ENCODE measurements at regions of chr16 and their contacts with region 1.

Region 1: DNA sequence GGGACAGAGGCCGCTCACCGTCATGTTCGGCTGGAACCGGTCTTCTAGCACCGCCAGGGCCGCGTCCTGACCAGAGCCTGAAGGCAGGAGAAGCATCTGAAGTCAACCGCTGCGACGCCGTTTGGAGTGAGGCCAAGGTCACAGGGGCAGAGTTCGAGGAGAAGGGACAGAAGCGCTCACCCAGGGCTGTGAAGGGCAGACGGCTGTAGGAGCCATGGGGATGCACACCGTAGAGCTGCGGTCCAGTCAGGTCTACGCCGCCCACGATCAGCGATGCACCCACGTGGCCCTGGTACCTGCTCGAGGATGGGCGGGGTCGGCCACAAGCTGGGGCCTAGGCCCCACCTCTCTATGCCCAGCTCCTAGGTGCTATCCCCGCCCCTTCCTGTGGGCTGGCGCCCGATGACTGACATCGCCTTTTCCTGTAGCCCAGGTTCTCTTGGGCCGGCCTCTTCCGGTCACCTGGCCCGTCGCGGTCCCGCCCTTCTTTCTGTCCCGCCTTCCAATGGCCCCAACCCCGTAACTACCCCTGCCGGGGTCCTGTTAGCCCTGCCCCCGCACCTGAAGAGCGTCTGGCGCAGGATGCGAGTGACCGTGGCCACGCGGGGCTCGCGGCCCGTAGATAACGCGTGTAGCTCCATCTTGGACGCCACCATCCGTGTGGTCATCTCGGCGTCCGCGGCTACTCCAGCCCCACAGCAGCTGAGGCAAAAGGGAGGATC is 1.1 kb downstream of the PSMB10 start:
- DNase-seq: peak; percentile 95
- ATAC-seq: peak; percentile 89
- H3K4me3 ChIP-seq: peak overlapping the region; percentile 77 to 96 (median 93)
- H3K4me3 Mint-ChIP-seq: peak overlapping the region; percentile 100
- H3K27ac ChIP-seq: peak overlapping the region; percentile 67 to 85
- H3K27ac Mint-ChIP-seq: peak overlapping the region; percentile 99
- H3K4me1 ChIP-seq: peaks cover 25 to 38% of the 10 kb centered on the region in 2 donors
- H3K4me1 Mint-ChIP-seq: peaks cover 31% of the 10 kb centered on the region
- H3K27me3 ChIP-seq: no peaks in the 10 kb centered on the region
- H3K27me3 Mint-ChIP-seq: no peaks in the 10 kb centered on the region
- CTCF ChIP-seq: no peak

Region 2: DNA sequence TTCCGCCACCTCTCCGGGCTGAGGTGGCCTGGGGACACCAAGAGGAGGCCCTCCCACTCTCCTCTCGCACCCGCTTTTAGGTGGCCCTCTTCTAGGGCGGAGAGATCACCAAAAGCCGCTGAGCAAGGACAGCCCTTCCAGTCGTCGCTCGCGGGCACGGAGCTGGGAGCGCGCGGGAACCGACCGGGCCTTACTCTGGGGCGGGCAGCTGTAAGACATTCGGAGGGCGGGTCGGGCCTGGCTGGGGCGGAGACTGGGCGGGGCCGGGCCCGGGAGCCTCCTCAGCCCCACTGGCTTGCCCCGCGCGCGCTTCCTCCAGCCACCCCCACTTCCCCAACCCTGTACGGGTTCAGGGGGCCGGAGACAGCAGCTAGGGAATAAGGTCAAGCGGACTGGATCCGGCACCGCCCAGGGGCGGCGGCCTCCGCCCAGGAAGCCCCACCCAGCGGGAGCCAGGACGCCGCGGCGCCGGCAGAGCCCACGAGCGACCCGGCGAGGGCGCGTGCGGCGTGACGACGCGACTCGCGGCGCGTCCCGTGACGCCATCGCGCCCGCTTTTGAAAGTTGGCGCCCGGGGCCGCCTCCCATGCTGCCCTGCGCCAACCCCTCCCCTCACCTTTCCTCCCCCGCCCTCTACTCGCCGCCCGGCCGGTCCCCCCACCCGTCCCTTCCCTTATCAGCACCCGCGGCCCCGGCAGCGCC is 373.6 kb before region 1 on chr16:
- CTCF ChIA-PET with region 1: no interaction called
- POLR2A ChIA-PET with region 1: interaction called, 3 read pairs
- intact Hi-C with region 1: loop called (anchors 5 kb)
- DNase-seq: peak; percentile 99
- ATAC-seq: peak; percentile 74
- H3K4me3 ChIP-seq: peak overlapping the region; percentile 50 to 76 (median 60)
- H3K4me3 Mint-ChIP-seq: peak overlapping the region; percentile 89
- H3K27ac ChIP-seq: peak overlapping the region; percentile 71 to 80
- H3K27ac Mint-ChIP-seq: peak overlapping the region; percentile 95
- H3K4me1 ChIP-seq: peaks cover 42 to 55% of the 10 kb centered on the region in 2 donors
- H3K4me1 Mint-ChIP-seq: peaks cover 50% of the 10 kb centered on the region
- H3K27me3 ChIP-seq: no peaks in the 10 kb centered on the region
- H3K27me3 Mint-ChIP-seq: no peaks in the 10 kb centered on the region
- CTCF ChIP-seq: no peak

Region 3: GRCh38 chr16:67790071-67790470 is 145.5 kb before region 1 on chr16:
- CTCF ChIA-PET with region 1: no interaction called
- POLR2A ChIA-PET with region 1: no interaction called
- intact Hi-C with region 1: no loop called
- DNase-seq: no peak
- ATAC-seq: no peak
- H3K4me3 ChIP-seq: no peak overlapping the region
- H3K4me3 Mint-ChIP-seq: no peak overlapping the region
- H3K27ac ChIP-seq: no peak overlapping the region
- H3K27ac Mint-ChIP-seq: no peak overlapping the region
- H3K4me1 ChIP-seq: peaks cover 18 to 24% of the 10 kb centered on the region in 2 donors
- H3K4me1 Mint-ChIP-seq: peaks cover 29% of the 10 kb centered on the region
- H3K27me3 ChIP-seq: no peaks in the 10 kb centered on the region
- H3K27me3 Mint-ChIP-seq: no peaks in the 10 kb centered on the region
- CTCF ChIP-seq: no peak

Region 4: GRCh38 chr16:67816240-67817031 is 119.1 kb before region 1 on chr16:
- CTCF ChIA-PET with region 1: interaction called, 21 read pairs
- POLR2A ChIA-PET with region 1: no interaction called
- intact Hi-C with region 1: no loop called
- DNase-seq: peak; percentile 92
- ATAC-seq: peak; percentile 99
- H3K4me3 ChIP-seq: no peak overlapping the region
- H3K4me3 Mint-ChIP-seq: peak overlapping the region; percentile 65
- H3K27ac ChIP-seq: no peak overlapping the region
- H3K27ac Mint-ChIP-seq: peak overlapping the region; percentile 59
- H3K4me1 ChIP-seq: peaks cover 0 to 7% of the 10 kb centered on the region in 2 donors
- H3K4me1 Mint-ChIP-seq: peaks cover 6% of the 10 kb centered on the region
- H3K27me3 ChIP-seq: no peaks in the 10 kb centered on the region
- H3K27me3 Mint-ChIP-seq: no peaks in the 10 kb centered on the region
- CTCF ChIP-seq: peak; percentile 100

Region 5: GRCh38 chr16:67883872-67884261 is 51.7 kb before region 1 on chr16:
- CTCF ChIA-PET with region 1: interaction called, 30 read pairs
- POLR2A ChIA-PET with region 1: no interaction called
- intact Hi-C with region 1: no loop called
- DNase-seq: peak; percentile 81
- ATAC-seq: peak; percentile 88
- H3K4me3 ChIP-seq: no peak overlapping the region
- H3K4me3 Mint-ChIP-seq: no peak overlapping the region
- H3K27ac ChIP-seq: no peak overlapping the region
- H3K27ac Mint-ChIP-seq: no peak overlapping the region
- H3K4me1 ChIP-seq: no peaks in the 10 kb centered on the region
- H3K4me1 Mint-ChIP-seq: no peaks in the 10 kb centered on the region
- H3K27me3 ChIP-seq: no peaks in the 10 kb centered on the region
- H3K27me3 Mint-ChIP-seq: no peaks in the 10 kb centered on the region
- CTCF ChIP-seq: peak; percentile 96

Region 6: DNA sequence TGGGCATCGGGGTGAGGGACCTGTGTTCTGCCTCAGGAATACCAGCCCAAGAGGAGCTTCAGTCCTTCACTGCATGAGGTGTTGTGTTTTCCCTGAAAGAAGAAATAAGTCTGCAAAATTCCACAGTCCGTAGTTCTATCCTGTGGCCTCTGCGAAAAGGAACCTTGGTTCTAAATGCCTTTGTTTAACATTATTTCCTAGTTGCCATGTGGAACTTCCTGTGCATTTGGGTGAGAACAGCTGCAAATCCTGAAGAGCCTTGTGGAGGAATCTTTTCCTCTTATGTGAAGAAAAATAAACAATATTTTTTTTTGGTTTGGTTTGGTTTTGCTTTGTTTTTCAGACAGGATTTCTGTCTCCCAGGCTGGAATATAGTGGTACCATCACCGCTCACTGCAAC is 32.7 kb before region 1 on chr16:
- CTCF ChIA-PET with region 1: no interaction called
- POLR2A ChIA-PET with region 1: no interaction called
- intact Hi-C with region 1: no loop called
- DNase-seq: no peak
- ATAC-seq: no peak
- H3K4me3 ChIP-seq: no peak overlapping the region
- H3K4me3 Mint-ChIP-seq: no peak overlapping the region
- H3K27ac ChIP-seq: no peak overlapping the region
- H3K27ac Mint-ChIP-seq: no peak overlapping the region
- H3K4me1 ChIP-seq: no peaks in the 10 kb centered on the region
- H3K4me1 Mint-ChIP-seq: no peaks in the 10 kb centered on the region
- H3K27me3 ChIP-seq: no peaks in the 10 kb centered on the region
- H3K27me3 Mint-ChIP-seq: no peaks in the 10 kb centered on the region
- CTCF ChIP-seq: no peak

Region 7: GRCh38 chr16:67979955-67980678 is 44.6 kb after region 1 on chr16 and contains the start of gene DPEP3:
- CTCF ChIA-PET with region 1: interaction called, 4 read pairs
- POLR2A ChIA-PET with region 1: interaction called, 11 read pairs
- intact Hi-C with region 1: no loop called
- DNase-seq: no peak
- ATAC-seq: no peak
- H3K4me3 ChIP-seq: no peak within 1 kb of the TSS
- H3K4me3 Mint-ChIP-seq: no peak within 1 kb of the TSS
- H3K27ac ChIP-seq: no peak within 1 kb of the TSS
- H3K27ac Mint-ChIP-seq: no peak within 1 kb of the TSS
- H3K4me1 ChIP-seq: peaks cover 19 to 30% of the 10 kb centered on the region in 2 donors
- H3K4me1 Mint-ChIP-seq: peaks cover 26% of the 10 kb centered on the region
- H3K27me3 ChIP-seq: peaks cover 0 to 3% (median 0%) of the 10 kb centered on the region in 4 experiments
- H3K27me3 Mint-ChIP-seq: no peaks in the 10 kb centered on the region
- CTCF ChIP-seq: no peak
- total RNA-seq, gene DPEP3: 2.0 and 2.6 TPM in 2 replicates

Region 8: GRCh38 chr16:68064791-68065365 is 129.3 kb after region 1 on chr16:
- CTCF ChIA-PET with region 1: interaction called, 4 read pairs
- POLR2A ChIA-PET with region 1: interaction called, 10 read pairs
- intact Hi-C with region 1: no loop called
- DNase-seq: peak; percentile 74
- ATAC-seq: peak; percentile 93
- H3K4me3 ChIP-seq: no peak overlapping the region
- H3K4me3 Mint-ChIP-seq: no peak overlapping the region
- H3K27ac ChIP-seq: no peak overlapping the region
- H3K27ac Mint-ChIP-seq: peak overlapping the region; percentile 33
- H3K4me1 ChIP-seq: peaks cover 9 to 22% of the 10 kb centered on the region in 2 donors
- H3K4me1 Mint-ChIP-seq: peaks cover 23% of the 10 kb centered on the region
- H3K27me3 ChIP-seq: no peaks in the 10 kb centered on the region
- H3K27me3 Mint-ChIP-seq: no peaks in the 10 kb centered on the region
- CTCF ChIP-seq: peak; percentile 90

Measured in B cell (primary cell).